ENCODE measurements at regions of chr6 and their contacts with region 1.

Region 1: GRCh38 chr6:148395583-148396101 is 53.0 kb downstream of the SASH1 start:
- DNase-seq: peak in 5 of 10 donors; percentile 38 to 71 (median 51)
- H3K4me3 ChIP-seq: peak overlapping the region in 1 of 59 donors; percentile 6
- H3K27ac ChIP-seq: peak overlapping the region in 55 of 59 donors; percentile 1 to 91 (median 71)
- H3K27me3 ChIP-seq: no peaks in the 10 kb centered on the region
- CTCF ChIP-seq: no peak

Region 2: DNA sequence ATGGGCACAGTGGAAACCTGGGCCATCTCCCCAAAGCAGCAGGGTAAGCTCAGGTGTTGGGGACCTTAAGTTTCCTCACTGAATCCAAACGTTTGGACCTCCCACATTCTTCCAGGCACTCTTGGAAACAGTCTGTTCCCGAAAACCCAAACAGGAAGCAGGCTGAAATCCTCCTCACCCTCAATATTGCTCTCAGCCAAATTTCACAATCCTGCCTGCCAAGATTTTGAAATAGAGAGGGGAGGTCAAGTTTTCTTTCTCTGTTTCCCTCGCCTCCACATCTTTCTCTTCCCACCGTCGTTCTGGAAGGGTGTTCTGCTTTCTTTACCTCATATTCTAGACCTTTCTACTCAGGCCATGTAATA is 445.0 kb before region 1 on chr6:
- intact Hi-C with region 1: no loop called
- DNase-seq: no peak
- H3K4me3 ChIP-seq: no peak overlapping the region
- H3K27ac ChIP-seq: peak overlapping the region in 2 of 59 donors; percentile 11 to 26
- H3K27me3 ChIP-seq: no peaks in the 10 kb centered on the region
- CTCF ChIP-seq: no peak

Region 3: GRCh38 chr6:148435386-148435785 is 39.7 kb after region 1 on chr6:
- intact Hi-C with region 1: loop called in 1 of 2 experiments (anchors 5 kb)
- DNase-seq: no peak
- H3K4me3 ChIP-seq: no peak overlapping the region
- H3K27ac ChIP-seq: no peak overlapping the region
- H3K27me3 ChIP-seq: no peaks in the 10 kb centered on the region
- CTCF ChIP-seq: no peak

Region 4: GRCh38 chr6:148451690-148452089 is 56.0 kb after region 1 on chr6:
- intact Hi-C with region 1: no loop called
- DNase-seq: no peak
- H3K4me3 ChIP-seq: no peak overlapping the region
- H3K27ac ChIP-seq: peak overlapping the region in 17 of 59 donors; percentile 2 to 91 (median 57)
- H3K27me3 ChIP-seq: no peaks in the 10 kb centered on the region
- CTCF ChIP-seq: no peak

Region 5: GRCh38 chr6:148530394-148530953 is 134.8 kb after region 1 on chr6:
- intact Hi-C with region 1: loop called in 1 of 2 experiments (anchors 5 kb)
- DNase-seq: no peak
- H3K4me3 ChIP-seq: peak overlapping the region in 46 of 59 donors; percentile 1 to 61 (median 32)
- H3K27ac ChIP-seq: peak overlapping the region; percentile 6 to 98 (median 84)
- H3K27me3 ChIP-seq: no peaks in the 10 kb centered on the region
- CTCF ChIP-seq: peak in 4 of 56 donors; percentile 5 to 33 (median 12)